Natural killer cell (primary cell): ENCODE measurements at regions of chr14 and their contacts with region 1.

Region 1: DNA sequence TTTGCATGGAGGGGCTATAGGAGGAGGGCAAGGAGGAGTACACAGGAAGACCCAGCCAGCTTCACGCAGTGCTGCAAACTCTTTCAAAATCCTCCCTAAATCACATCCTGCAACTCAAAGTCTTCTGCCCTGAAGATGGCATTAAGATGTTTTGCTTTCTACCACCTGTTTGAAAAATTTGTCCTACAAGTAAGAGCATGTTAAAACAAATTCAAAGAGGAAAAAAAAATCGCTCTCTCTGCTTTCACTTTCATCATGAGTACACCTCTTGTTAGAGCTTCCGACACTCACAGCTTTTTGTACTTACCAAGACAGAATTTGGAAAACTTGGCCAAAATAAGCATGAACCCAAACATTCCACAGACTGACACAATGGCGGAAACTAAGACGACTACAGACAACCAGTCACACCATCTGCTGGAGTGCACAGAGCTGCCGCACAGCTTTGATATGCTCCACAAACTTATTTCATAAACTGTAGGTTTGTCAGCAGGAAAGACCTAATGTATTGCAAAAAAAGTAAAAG is 21.3 kb downstream of the GCH1 start:
- DNase-seq: peak in 1 of 2 donors; percentile 62
- ATAC-seq: peak; percentile 64 to 68 (median 66)
- H3K4me3 ChIP-seq: peak overlapping the region; percentile 33
- H3K4me3 Mint-ChIP-seq: peak overlapping the region; percentile 96
- H3K27ac ChIP-seq: peak overlapping the region; percentile 81
- H3K27ac Mint-ChIP-seq: peak overlapping the region; percentile 90 to 95
- H3K4me1 ChIP-seq: peaks cover 11% of the 10 kb centered on the region
- H3K4me1 Mint-ChIP-seq: peaks cover 39 to 59% of the 10 kb centered on the region in 2 donors
- H3K27me3 ChIP-seq: no peaks in the 10 kb centered on the region
- H3K27me3 Mint-ChIP-seq: no peaks in the 10 kb centered on the region
- CTCF ChIP-seq: no peak

Region 2: DNA sequence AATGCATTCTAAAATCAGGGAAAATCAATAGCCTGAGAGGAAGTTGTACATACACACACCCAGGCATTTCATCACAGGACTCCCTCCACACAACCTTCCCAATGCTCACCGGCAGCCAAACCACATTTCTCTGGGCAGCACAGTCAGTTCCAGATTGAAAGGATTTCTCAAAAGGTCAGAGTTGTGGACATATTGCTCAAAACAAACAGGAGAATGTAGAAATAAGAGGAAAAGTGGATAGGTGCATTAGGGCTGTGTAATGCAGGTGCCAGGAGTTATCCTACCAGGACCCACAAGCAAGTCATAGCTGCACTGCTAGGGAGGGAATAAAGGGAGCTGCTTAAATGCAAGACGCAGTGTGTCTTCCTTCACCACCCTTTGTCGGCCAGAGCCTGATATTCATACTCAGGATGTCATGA is 41.6 kb before region 1 on chr14:
- intact Hi-C with region 1: no loop called
- DNase-seq: no peak
- ATAC-seq: no peak
- H3K4me3 ChIP-seq: no peak overlapping the region
- H3K4me3 Mint-ChIP-seq: no peak overlapping the region
- H3K27ac ChIP-seq: no peak overlapping the region
- H3K27ac Mint-ChIP-seq: peak overlapping the region; percentile 16 to 51
- H3K4me1 ChIP-seq: no peaks in the 10 kb centered on the region
- H3K4me1 Mint-ChIP-seq: peaks cover 8 to 10% of the 10 kb centered on the region in 2 donors
- H3K27me3 ChIP-seq: no peaks in the 10 kb centered on the region
- H3K27me3 Mint-ChIP-seq: no peaks in the 10 kb centered on the region
- CTCF ChIP-seq: no peak

Region 3: DNA sequence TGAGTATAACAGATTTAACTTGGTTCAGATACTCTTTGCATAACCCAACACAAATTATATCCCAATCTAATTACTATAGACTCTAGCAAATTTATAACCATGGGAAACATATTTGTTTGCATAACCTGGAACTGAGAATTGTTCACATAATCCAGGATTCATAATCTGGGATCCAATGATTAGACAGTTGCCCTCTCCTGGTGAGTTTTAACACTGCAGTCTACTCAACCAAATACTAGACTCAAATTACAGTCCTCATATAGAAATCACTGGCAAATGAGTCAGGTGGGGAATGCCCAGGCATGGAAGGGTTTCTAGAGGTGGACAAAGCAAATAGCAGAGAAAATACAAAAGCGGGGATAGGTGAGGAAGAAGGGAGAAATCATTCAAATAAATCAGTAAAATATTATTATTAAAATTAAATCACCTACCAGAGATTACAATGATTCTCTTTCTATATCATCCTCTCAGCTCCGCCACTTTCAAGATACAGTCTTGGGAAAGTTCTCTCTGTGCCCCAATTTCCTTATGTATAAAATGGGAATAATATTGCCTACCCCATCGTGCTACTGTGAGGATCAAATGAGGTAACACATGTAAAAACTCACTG is 12.0 kb after region 1 on chr14:
- intact Hi-C with region 1: loop called (anchors 1 kb)
- DNase-seq: peak in 1 of 2 donors; percentile 71
- ATAC-seq: peak; percentile 73 to 96 (median 83)
- H3K4me3 ChIP-seq: no peak overlapping the region
- H3K4me3 Mint-ChIP-seq: no peak overlapping the region
- H3K27ac ChIP-seq: no peak overlapping the region
- H3K27ac Mint-ChIP-seq: peak overlapping the region in 1 of 2 donors; percentile 10
- H3K4me1 ChIP-seq: no peaks in the 10 kb centered on the region
- H3K4me1 Mint-ChIP-seq: peaks cover 52 to 62% of the 10 kb centered on the region in 2 donors
- H3K27me3 ChIP-seq: no peaks in the 10 kb centered on the region
- H3K27me3 Mint-ChIP-seq: no peaks in the 10 kb centered on the region
- CTCF ChIP-seq: peak; percentile 97

Region 4: DNA sequence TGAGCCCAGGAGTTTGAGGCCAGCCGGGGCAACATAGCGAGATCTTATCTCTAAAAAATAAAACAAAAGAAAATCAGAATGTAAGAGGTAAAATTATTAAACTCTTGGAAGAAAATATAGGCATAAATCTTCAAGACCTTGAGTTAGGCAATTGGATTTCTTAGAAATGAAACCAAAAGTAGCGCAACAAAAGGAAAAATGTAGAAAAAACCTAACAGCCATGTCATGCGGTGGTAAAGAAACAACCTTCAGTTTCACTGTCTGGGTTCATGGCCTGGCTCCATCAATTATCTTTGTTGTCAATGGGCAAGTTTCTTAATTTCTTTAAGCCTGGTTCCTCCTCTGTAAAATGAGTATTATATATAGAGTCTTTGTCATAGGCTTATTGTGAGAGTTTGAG is 26.9 kb after region 1 on chr14:
- intact Hi-C with region 1: no loop called
- DNase-seq: peak in 1 of 2 donors; percentile 51
- ATAC-seq: peak; percentile 72 to 88 (median 86)
- H3K4me3 ChIP-seq: no peak overlapping the region
- H3K4me3 Mint-ChIP-seq: peak overlapping the region; percentile 71
- H3K27ac ChIP-seq: no peak overlapping the region
- H3K27ac Mint-ChIP-seq: peak overlapping the region; percentile 67 to 85
- H3K4me1 ChIP-seq: peaks cover 6% of the 10 kb centered on the region
- H3K4me1 Mint-ChIP-seq: peaks cover 20 to 23% of the 10 kb centered on the region in 2 donors
- H3K27me3 ChIP-seq: no peaks in the 10 kb centered on the region
- H3K27me3 Mint-ChIP-seq: no peaks in the 10 kb centered on the region
- CTCF ChIP-seq: no peak

Region 5: DNA sequence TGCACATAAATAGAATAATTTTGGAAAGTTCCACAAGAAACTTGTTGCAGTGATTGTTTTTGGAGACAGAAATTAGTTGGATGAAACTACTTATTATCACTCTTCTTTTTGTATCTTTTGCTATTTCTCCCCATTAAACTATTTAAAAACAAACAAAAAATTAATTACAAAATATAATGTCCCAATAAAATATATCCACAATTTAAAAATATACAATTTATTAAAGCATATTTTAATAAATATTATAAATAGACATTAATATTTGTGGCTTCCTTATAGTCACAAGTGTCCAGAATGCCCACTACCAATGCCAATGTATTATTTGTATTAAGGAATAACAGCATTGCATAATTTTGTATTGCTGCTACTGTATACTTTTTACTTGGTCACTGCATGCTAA is 73.8 kb after region 1 on chr14:
- intact Hi-C with region 1: no loop called
- DNase-seq: no peak
- ATAC-seq: no peak
- H3K4me3 ChIP-seq: no peak overlapping the region
- H3K4me3 Mint-ChIP-seq: no peak overlapping the region
- H3K27ac ChIP-seq: no peak overlapping the region
- H3K27ac Mint-ChIP-seq: no peak overlapping the region
- H3K4me1 ChIP-seq: no peaks in the 10 kb centered on the region
- H3K4me1 Mint-ChIP-seq: peaks cover 0 to 4% of the 10 kb centered on the region in 2 donors
- H3K27me3 ChIP-seq: no peaks in the 10 kb centered on the region
- H3K27me3 Mint-ChIP-seq: no peaks in the 10 kb centered on the region
- CTCF ChIP-seq: no peak